Lower leg skin (tissue), 4 donors: ENCODE measurements at regions of chr14 and their contacts with region 1.

Region 1: DNA sequence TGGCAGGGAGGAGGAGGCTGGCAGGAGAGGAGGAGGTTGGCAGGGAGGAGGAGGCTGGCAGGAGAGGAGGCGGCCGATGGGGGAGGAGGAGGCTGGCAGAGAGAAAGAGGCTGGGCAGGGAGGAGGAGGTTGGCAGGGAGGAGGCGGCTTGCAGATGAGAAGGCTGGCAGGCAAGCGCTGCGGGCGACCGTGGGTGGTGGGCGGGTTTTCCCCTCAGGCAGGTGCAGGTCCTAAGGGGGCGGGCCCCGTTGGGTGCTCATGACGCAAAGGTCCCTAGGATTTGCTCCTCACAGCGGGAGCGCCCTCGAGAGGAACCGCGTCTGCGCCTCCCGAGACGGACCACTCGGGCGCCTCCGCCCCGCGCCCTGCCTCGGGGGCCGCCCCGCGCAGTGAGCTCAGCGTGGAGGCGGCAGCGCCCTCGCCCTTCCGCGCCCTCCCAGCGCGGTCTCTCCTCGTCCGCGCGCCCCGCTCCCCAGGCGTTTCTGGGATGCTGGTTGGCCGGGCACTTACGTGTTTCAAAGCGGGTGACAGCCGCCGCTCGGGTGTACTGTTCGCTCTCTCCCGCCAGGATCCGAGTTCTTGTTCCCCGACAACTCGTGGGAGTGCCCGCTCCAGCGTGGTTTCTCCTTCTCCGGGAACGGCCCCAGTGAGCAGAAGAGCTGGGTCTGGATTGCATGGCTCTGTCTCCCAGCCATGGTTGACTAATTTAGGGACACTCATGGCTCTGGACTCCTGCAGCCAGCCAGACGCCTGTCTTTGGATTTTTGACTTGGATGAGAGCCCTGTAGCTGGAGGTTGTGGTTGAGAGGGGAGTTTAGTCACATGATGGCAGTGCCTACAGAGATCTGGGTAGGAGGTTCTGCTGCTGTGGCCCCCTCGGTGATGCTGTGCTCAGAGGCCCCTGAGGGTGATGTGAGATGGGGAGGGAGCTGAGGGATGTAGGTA is 64.1 kb upstream of the PPP4R3A start:
- DNase-seq: peak in 1 of 2 donors; percentile 18
- H3K4me3 ChIP-seq: peak overlapping the region; percentile 20
- CTCF ChIP-seq: no peak
- POLR2A ChIP-seq: no peak

Region 2: GRCh38 chr14:91545946-91546716 is 28.0 kb before region 1 on chr14:
- intact Hi-C with region 1: loop called (anchors 1 kb)
- DNase-seq: no peak
- H3K4me3 ChIP-seq: no peak overlapping the region
- CTCF ChIP-seq: no peak
- POLR2A ChIP-seq: no peak